IMR-90 (cell line): ENCODE measurements at regions of chr11 and their contacts with region 1.

Region 1: DNA sequence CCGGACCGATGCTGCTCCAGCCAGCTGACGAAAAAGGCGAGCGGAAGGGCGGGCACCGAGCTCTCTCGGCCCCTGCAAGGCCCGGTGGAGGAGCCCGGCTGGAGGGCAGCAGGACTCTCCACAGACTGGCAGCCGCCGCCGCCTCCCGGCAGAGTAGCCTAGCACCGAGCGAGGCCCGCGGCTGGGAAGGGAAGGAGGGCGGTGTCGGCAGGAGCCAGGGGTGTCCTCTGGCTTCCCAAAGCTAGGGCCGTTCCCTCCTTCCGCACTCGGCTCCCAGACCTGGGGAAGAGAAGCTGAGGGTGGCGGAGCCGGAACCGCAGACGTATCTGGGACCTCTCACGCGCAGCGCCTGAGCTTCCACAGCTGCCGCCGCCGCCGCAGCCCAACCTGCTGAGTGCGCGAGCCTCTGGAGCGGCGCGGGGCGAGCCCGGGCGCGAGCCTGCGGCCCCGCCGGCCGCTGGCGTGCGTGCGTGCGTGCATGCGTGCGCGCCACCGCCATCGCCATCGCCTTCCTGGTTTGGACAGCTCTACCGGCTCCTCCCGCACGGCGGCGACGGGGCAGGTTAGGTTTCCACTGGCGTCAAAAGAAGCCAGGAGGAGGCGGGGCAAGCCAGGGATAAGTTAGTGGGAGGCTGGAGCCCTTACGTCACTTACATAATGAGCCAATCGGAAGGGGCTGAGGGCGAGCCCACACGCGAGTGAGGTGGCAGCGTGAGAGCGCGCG is at the start of gene RAB6A:
- DNase-seq: peak; percentile 100
- ATAC-seq: peak; percentile 94
- H3K4me3 ChIP-seq: peak within 1 kb of the TSS; percentile 81
- H3K27ac ChIP-seq: peak within 1 kb of the TSS; percentile 92
- H3K4me1 ChIP-seq: no peaks in the 10 kb centered on the region
- H3K27me3 ChIP-seq: no peaks in the 10 kb centered on the region
- CTCF ChIP-seq: peak; percentile 46
- POLR2A ChIP-seq: peak; percentile 81
- RAD21 ChIP-seq: peak; percentile 37
- total RNA-seq, gene RAB6A: 81.0 and 120 TPM in 2 replicates

Region 2: GRCh38 chr11:73779084-73779902 is 18.5 kb after region 1 on chr11:
- CTCF ChIA-PET with region 1: interaction called, 4 read pairs
- POLR2A ChIA-PET with region 1: interaction called, 11 read pairs
- dilution Hi-C with region 1: no loop called
- in situ Hi-C with region 1: no loop called
- intact Hi-C with region 1: loop called (anchors 1 kb)
- DNase-seq: peak; percentile 97
- ATAC-seq: peak; percentile 100
- H3K4me3 ChIP-seq: peak overlapping the region; percentile 50
- H3K27ac ChIP-seq: peak overlapping the region; percentile 88
- H3K4me1 ChIP-seq: no peaks in the 10 kb centered on the region
- H3K27me3 ChIP-seq: no peaks in the 10 kb centered on the region
- CTCF ChIP-seq: no peak
- POLR2A ChIP-seq: peak; percentile 78
- RAD21 ChIP-seq: no peak

Region 3: GRCh38 chr11:73876424-73877300 is 115.8 kb after region 1 on chr11 and contains the starts of genes COA4 and PAAF1:
- CTCF ChIA-PET with region 1: no interaction called
- POLR2A ChIA-PET with region 1: no interaction called
- dilution Hi-C with region 1: no loop called
- in situ Hi-C with region 1: no loop called
- intact Hi-C with region 1: loop called (anchors 1 kb)
- DNase-seq: peak; percentile 95
- ATAC-seq: peak; percentile 97
- H3K4me3 ChIP-seq: peak within 1 kb of the TSS; percentile 97
- H3K27ac ChIP-seq: peak within 1 kb of the TSS; percentile 99
- H3K4me1 ChIP-seq: peaks cover 5% of the 10 kb centered on the region
- H3K27me3 ChIP-seq: no peaks in the 10 kb centered on the region
- CTCF ChIP-seq: no peak
- POLR2A ChIP-seq: peak; percentile 68; the same call in 1 of the 2 replicates
- RAD21 ChIP-seq: no peak
- total RNA-seq, gene COA4: 78.0 and 95.5 TPM in 2 replicates
- total RNA-seq, gene PAAF1: 15.0 and 15.1 TPM in 2 replicates

Region 4: DNA sequence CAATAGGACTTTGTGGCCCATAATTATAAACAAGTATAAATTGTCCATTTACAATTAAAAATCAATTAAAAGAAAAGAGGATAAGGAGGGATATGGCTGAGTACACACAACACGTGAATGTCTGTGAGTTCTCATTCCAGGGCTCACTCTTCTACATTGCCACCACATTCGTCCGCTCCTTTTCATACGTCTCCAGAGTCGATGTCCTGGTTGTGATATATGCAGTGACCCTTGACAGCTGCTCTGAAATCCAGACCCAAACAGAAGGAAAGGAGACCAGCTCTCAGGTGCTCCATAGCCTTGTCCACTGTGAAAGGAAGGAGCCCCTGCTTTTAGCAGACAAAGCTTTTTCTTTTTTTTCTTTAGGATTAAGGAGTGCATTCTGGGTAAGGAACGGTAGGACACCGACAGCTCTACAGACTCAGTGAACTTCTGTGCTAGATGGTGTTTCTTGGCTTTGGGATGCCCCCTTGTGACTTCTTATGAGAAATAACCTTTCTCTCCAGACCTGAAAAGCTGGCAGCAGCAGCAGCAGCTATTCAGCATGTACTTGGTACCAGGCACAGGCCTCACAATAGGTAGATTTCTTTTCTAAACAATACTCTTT is 170.3 kb after region 1 on chr11:
- CTCF ChIA-PET with region 1: no interaction called
- POLR2A ChIA-PET with region 1: no interaction called
- dilution Hi-C with region 1: no loop called
- in situ Hi-C with region 1: no loop called
- intact Hi-C with region 1: loop called (anchors 1 kb)
- DNase-seq: peak; percentile 84
- ATAC-seq: peak; percentile 95
- H3K4me3 ChIP-seq: no peak overlapping the region
- H3K27ac ChIP-seq: no peak overlapping the region
- H3K4me1 ChIP-seq: no peaks in the 10 kb centered on the region
- H3K27me3 ChIP-seq: no peaks in the 10 kb centered on the region
- CTCF ChIP-seq: peak; percentile 64
- POLR2A ChIP-seq: no peak
- RAD21 ChIP-seq: peak; percentile 81